ENCODE measurements at regions of chr15 and their contacts with region 1.

Region 1: DNA sequence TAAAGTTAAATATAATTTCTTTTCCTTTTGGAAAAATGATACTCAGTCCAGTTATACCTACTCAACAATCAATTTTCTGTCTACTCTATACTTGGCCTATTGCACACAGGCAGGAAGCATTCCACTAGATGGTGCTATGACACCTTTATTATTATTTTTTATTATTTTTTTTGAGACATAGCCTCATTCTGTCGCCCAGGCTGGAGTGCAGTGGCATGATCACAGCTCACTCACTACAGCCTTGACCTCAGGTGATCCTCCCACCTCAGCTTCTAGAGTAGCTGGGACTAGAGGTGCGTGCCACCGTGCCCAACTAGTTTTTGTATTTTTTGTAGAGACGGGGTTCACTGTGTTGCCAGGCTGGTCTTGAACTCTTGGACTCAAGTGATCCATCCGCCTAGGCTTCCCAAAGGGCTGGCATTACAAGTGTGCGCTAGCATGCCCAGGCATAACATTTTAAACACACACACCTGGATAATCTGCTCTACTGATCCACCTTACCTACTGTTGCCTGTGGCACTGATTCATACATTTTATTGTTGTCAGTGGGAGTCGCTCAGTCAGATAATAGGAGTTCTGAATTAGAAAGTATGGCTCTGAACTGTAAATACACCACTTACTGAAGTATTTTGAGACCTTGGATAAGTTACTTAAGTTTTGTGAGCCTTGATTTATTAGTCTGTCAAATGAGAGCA is 56.2 kb downstream of the EIF3J start:
- DNase-seq: peak; percentile 39
- H3K4me3 Mint-ChIP-seq: no peak overlapping the region
- H3K27ac Mint-ChIP-seq: peak overlapping the region; percentile 38
- H3K4me1 Mint-ChIP-seq: peaks cover 29% of the 10 kb centered on the region
- H3K27me3 Mint-ChIP-seq: no peaks in the 10 kb centered on the region

Region 2: DNA sequence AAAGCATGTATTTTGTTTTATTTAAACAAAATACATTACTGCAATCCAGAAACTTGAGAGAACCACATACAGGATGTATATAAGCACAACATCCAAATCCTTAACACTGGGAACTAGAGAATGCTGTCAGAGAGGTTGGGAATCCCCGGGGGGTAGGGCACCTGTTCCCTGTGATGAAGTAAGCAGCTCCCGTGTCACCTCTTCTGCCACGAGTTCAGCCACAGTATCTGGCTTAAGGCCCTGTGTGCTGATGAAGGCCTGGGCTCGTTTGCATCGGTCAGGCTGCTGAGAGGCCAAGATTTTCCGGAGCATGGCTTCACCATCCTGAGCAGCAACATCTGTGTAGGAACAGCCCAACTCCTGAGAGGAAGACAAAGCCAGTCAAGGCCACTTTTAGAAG is 19.8 kb before region 1 on chr15:
- CTCF ChIA-PET with region 1: interaction called, 18 read pairs
- DNase-seq: no peak
- H3K4me3 Mint-ChIP-seq: no peak overlapping the region
- H3K27ac Mint-ChIP-seq: no peak overlapping the region
- H3K4me1 Mint-ChIP-seq: peaks cover 10% of the 10 kb centered on the region
- H3K27me3 Mint-ChIP-seq: no peaks in the 10 kb centered on the region